Natural killer cell (primary cell): ENCODE measurements at regions of chr10 and their contacts with region 1.

Region 1: GRCh38 chr10:104322416-104322782 is 15.9 kb downstream of the ITPRIP start:
- DNase-seq: peak in 1 of 2 donors; percentile 51
- ATAC-seq: peak; percentile 9 to 26 (median 10)
- H3K4me3 ChIP-seq: no peak overlapping the region
- H3K4me3 Mint-ChIP-seq: peak overlapping the region; percentile 82
- H3K27ac ChIP-seq: peak overlapping the region; percentile 94
- H3K27ac Mint-ChIP-seq: peak overlapping the region; percentile 98 to 100
- H3K4me1 ChIP-seq: peaks cover 94% of the 10 kb centered on the region
- H3K4me1 Mint-ChIP-seq: peaks cover 100% of the 10 kb centered on the region in 2 donors
- H3K27me3 ChIP-seq: no peaks in the 10 kb centered on the region
- H3K27me3 Mint-ChIP-seq: no peaks in the 10 kb centered on the region
- CTCF ChIP-seq: no peak

Region 2: GRCh38 chr10:104308439-104308903 is 13.9 kb before region 1 on chr10:
- intact Hi-C with region 1: loop called (anchors 2 kb)
- DNase-seq: peak in 1 of 2 donors; percentile 61
- ATAC-seq: no peak
- H3K4me3 ChIP-seq: no peak overlapping the region
- H3K4me3 Mint-ChIP-seq: peak overlapping the region; percentile 64
- H3K27ac ChIP-seq: peak overlapping the region; percentile 39
- H3K27ac Mint-ChIP-seq: peak overlapping the region; percentile 86 to 90
- H3K4me1 ChIP-seq: peaks cover 76% of the 10 kb centered on the region
- H3K4me1 Mint-ChIP-seq: peaks cover 85 to 87% of the 10 kb centered on the region in 2 donors
- H3K27me3 ChIP-seq: no peaks in the 10 kb centered on the region
- H3K27me3 Mint-ChIP-seq: no peaks in the 10 kb centered on the region
- CTCF ChIP-seq: no peak

Region 3: DNA sequence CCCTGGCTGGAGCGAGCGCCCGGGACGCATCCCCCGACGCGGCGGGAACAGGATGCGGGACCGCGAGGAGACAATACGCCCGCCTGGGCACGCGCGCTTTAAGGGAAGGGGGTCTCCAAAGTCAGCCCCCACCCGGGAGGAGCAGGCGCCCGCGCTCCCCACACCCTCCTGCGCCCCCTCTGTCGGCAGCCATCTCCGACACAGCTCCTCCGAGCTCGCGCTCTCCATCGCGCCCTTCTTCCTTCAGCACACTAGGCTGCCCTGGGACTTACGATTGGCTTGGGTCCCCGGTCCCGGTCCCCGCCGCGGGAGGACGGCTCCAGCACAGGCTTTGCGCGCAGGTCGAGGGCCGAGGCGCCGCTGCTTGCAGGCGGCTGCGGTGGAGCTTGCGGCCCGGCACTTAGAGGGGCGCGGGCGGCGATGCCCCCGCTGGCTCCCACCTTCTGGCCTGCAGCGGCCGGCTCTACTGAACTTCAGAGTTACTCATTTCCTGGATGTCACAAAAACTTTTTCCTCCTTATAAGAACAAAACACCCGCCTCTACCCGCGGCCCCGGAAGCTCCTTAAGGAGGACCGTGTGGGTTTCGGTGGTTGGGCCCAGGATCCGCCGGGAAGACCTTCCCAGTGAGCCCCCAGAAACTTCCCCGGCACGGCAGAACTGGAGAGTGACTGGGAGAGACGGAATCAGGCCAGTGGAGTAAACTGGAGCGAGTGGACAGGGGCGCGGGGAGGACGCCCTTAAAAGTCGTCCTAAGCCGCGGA is 15.8 kb after region 1 on chr10 and contains the start of gene ITPRIP:
- intact Hi-C with region 1: loop called (anchors 2 kb)
- DNase-seq: peak; percentile 77 to 85
- ATAC-seq: peak; percentile 65 to 86 (median 84)
- H3K4me3 ChIP-seq: peak within 1 kb of the TSS; percentile 61
- H3K4me3 Mint-ChIP-seq: peak within 1 kb of the TSS; percentile 100
- H3K27ac ChIP-seq: peak within 1 kb of the TSS; percentile 95
- H3K27ac Mint-ChIP-seq: peak within 1 kb of the TSS; percentile 98 to 100
- H3K4me1 ChIP-seq: peaks cover 45% of the 10 kb centered on the region
- H3K4me1 Mint-ChIP-seq: peaks cover 50 to 58% of the 10 kb centered on the region in 2 donors
- H3K27me3 ChIP-seq: no peaks in the 10 kb centered on the region
- H3K27me3 Mint-ChIP-seq: peaks cover 0 to 4% of the 10 kb centered on the region in 2 donors
- CTCF ChIP-seq: no peak
- total RNA-seq, gene ITPRIP: 172 to 225 (median 176) TPM

Region 4: DNA sequence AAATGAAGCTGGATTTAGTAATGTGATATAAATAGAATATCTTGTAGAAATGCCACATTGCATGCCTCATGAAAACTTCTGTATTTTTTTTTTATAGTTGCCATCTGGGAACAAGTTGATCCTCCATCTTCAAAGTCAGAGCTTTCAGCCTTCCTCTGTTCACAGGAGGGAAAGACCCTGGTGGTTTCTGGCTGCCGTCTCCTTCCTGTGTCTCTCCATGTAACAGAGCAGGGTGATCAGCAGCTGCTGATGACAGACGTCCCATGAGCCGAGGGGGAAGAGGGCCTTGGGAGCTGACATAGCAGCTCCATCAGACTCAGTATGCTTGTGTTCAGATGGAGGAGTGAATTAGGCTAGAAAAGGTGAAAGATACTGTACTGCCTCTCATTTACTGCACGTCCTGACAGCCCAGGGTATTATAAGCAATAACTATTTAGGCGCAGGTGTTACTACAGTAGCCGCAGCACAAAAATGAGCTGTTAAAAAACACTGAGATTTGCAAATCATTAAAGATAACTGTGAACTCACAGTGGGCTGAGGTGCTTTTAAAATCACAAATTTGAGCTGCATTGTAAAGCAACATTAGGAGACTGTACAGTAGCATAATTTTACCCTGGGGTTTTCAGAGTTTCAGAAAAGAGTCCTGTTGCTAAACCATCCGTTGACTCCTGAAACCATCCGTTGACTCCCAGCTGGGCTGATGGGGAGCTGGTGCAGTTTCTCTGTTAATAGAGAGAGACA is 134.6 kb after region 1 on chr10:
- intact Hi-C with region 1: no loop called
- DNase-seq: no peak
- ATAC-seq: peak in 1 of 3 donors; percentile 29
- H3K4me3 ChIP-seq: no peak overlapping the region
- H3K4me3 Mint-ChIP-seq: no peak overlapping the region
- H3K27ac ChIP-seq: no peak overlapping the region
- H3K27ac Mint-ChIP-seq: no peak overlapping the region
- H3K4me1 ChIP-seq: no peaks in the 10 kb centered on the region
- H3K4me1 Mint-ChIP-seq: no peaks in the 10 kb centered on the region
- H3K27me3 ChIP-seq: no peaks in the 10 kb centered on the region
- H3K27me3 Mint-ChIP-seq: peaks cover 18 to 53% of the 10 kb centered on the region in 2 donors
- CTCF ChIP-seq: no peak

Region 5: GRCh38 chr10:104767745-104768144 is 445.3 kb after region 1 on chr10:
- intact Hi-C with region 1: no loop called
- DNase-seq: no peak
- ATAC-seq: no peak
- H3K4me3 ChIP-seq: no peak overlapping the region
- H3K4me3 Mint-ChIP-seq: no peak overlapping the region
- H3K27ac ChIP-seq: no peak overlapping the region
- H3K27ac Mint-ChIP-seq: no peak overlapping the region
- H3K4me1 ChIP-seq: no peaks in the 10 kb centered on the region
- H3K4me1 Mint-ChIP-seq: no peaks in the 10 kb centered on the region
- H3K27me3 ChIP-seq: no peaks in the 10 kb centered on the region
- H3K27me3 Mint-ChIP-seq: peaks cover 8 to 10% of the 10 kb centered on the region in 2 donors
- CTCF ChIP-seq: no peak

Region 6: DNA sequence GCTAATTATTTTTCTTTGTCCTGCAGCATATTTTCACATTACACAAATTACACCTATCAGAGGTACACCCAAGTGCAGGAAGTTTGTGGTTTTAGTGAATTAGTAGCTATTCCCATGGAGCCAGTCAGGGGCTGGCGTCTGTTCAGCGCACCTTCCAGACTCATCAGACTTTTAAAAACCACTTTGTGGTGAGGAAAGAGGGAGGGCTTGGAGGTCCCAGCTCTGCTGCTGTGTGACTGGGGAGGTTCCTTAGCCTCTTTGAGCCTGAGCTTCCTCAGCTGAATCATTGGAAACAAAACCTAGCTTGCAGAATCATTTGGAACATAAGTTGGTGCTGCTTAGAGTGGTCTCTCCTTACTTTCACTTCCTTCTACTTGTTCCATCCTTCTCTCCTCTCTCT is 494.1 kb after region 1 on chr10:
- intact Hi-C with region 1: no loop called
- DNase-seq: no peak
- ATAC-seq: no peak
- H3K4me3 ChIP-seq: no peak overlapping the region
- H3K4me3 Mint-ChIP-seq: no peak overlapping the region
- H3K27ac ChIP-seq: no peak overlapping the region
- H3K27ac Mint-ChIP-seq: no peak overlapping the region
- H3K4me1 ChIP-seq: no peaks in the 10 kb centered on the region
- H3K4me1 Mint-ChIP-seq: no peaks in the 10 kb centered on the region
- H3K27me3 ChIP-seq: no peaks in the 10 kb centered on the region
- H3K27me3 Mint-ChIP-seq: peaks cover 0 to 7% of the 10 kb centered on the region in 2 donors
- CTCF ChIP-seq: no peak